Posterior vena cava (tissue), 2 donors: ENCODE measurements at regions of chr17 and their contacts with region 1.

Region 1: DNA sequence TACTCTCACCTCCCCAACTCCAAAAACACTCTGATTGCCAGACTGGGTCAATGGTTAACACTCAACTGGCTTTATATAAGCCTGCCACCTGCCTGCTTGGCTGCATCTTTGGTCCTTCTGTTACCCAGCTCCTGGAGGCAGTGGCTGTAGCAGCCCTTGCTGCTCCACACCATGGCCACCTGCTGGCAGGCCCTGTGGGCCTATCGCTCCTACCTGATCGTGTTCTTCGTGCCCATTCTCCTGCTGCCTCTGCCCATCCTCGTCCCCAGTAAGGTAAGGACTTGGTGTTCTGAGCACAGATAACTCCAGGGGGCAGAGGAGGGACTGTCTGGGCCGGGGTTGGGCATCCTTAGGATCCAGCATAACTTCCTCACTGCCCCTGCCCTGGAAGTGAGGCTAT is at the start of gene SLC13A2:
- DNase-seq: no peak
- total RNA-seq, gene SLC13A2: 0.14 TPM in 1 of 2 donors, not detected in the other

Region 2: DNA sequence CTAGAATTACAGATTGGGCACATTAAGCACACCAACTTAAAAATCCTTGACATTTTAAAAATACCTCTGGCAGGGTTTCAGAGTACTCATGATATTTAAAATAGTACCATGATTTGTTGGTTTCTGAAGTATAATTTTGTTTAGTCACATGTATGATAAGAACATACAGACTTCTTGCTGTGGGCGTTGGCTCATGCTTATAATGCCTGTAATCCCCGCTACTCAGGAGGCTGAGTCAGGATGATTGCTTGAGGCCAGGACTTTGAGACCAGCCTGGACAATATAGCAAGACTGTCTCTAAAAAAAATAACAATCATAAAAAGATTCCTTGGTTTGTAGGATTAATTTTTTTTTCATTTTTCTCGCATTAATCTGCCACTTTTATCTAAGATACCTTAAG is 751.7 kb before region 1 on chr17:
- intact Hi-C with region 1: loop called in 1 of 2 experiments (anchors 10 kb)
- DNase-seq: no peak

Region 3: GRCh38 chr17:28327031-28327607 is 146.4 kb before region 1 on chr17:
- intact Hi-C with region 1: no loop called
- DNase-seq: no peak